Panc1 (cell line): ENCODE measurements at regions of chr7 and their contacts with region 1.

Region 1: DNA sequence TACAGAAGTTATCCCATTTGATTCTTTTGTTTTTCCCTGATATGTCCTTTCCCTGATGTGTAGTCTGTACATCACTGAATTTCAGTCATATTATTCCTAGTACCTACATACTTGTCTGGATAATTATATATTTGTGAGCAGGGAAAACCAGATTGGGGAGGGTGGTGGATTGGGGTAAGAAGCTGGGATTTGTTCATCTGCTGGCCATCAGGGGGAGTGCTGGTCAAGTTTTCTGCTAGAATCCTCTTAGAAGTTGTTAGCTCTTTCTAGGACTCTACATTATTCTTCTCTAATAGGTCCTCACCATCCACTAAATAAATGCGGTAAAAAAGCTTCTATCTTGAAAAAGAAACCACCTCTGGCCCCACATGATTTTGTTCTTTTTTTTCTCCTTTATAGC is 232.7 kb upstream of the TAC1 start:
- DNase-seq: peak; percentile 30
- ATAC-seq: peak; percentile 82
- H3K4me3 ChIP-seq: no peak overlapping the region
- H3K27ac ChIP-seq: no peak overlapping the region
- H3K4me1 ChIP-seq: no peaks in the 10 kb centered on the region
- H3K27me3 ChIP-seq: no peaks in the 10 kb centered on the region; the same call in 1 of the 2 replicates
- CTCF ChIP-seq: peak; percentile 73

Region 2: GRCh38 chr7:97317575-97317974 is 181.6 kb before region 1 on chr7:
- CTCF ChIA-PET with region 1: no interaction called
- POLR2A ChIA-PET with region 1: no interaction called
- in situ Hi-C with region 1: no loop called
- intact Hi-C with region 1: no loop called
- DNase-seq: no peak
- ATAC-seq: no peak
- H3K4me3 ChIP-seq: no peak overlapping the region
- H3K27ac ChIP-seq: no peak overlapping the region
- H3K4me1 ChIP-seq: no peaks in the 10 kb centered on the region
- H3K27me3 ChIP-seq: no peaks in the 10 kb centered on the region
- CTCF ChIP-seq: no peak

Region 3: GRCh38 chr7:97555857-97556421 is 56.7 kb after region 1 on chr7:
- CTCF ChIA-PET with region 1: no interaction called
- POLR2A ChIA-PET with region 1: no interaction called
- in situ Hi-C with region 1: no loop called
- intact Hi-C with region 1: no loop called
- DNase-seq: no peak
- ATAC-seq: no peak
- H3K4me3 ChIP-seq: no peak overlapping the region
- H3K27ac ChIP-seq: no peak overlapping the region
- H3K4me1 ChIP-seq: no peaks in the 10 kb centered on the region
- H3K27me3 ChIP-seq: no peaks in the 10 kb centered on the region
- CTCF ChIP-seq: no peak

Region 4: DNA sequence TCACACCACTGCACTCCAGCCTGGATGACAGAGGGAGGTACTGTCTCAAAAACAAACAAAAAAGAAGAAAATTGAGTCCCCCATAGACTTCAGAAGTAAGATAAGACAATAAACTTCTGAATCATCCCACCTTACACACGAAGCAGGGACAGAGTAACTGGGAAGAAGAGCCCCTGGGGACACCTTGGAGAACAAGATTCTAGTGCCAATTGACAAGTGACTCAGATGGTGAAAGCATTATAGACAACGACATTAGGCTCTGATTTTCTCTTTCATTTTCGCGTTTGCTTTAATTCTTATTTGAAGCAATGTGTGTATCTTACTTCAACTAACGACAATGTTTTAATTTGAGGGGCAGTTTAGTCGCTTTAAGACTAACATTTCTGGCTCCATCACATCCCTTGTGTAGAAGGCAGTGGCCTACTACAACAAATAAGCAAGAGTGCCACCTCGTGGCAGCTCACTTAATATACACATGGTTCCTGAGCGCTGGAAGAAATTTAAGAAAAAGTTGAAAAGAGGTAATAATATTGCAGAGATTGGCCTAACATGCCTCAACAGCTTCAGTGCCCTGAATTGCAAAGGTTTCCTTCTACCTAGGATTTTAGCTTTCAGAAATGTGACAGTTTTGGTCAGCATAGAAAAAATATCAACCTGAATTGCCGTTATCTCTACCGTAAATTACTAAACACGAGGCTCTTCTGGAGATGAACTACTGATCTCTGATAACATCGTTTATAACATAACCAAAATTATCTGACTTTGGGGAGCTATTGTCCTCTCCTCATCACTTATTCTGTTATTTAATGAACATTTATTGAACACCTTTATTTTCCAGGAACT is 336.3 kb after region 1 on chr7:
- CTCF ChIA-PET with region 1: no interaction called
- POLR2A ChIA-PET with region 1: no interaction called
- in situ Hi-C with region 1: no loop called
- intact Hi-C with region 1: loop called (anchors 1 kb)
- DNase-seq: peak; percentile 60
- ATAC-seq: peak; percentile 91
- H3K4me3 ChIP-seq: no peak overlapping the region
- H3K27ac ChIP-seq: no peak overlapping the region
- H3K4me1 ChIP-seq: no peaks in the 10 kb centered on the region
- H3K27me3 ChIP-seq: peaks cover 16% of the 10 kb centered on the region; the same call in 1 of the 2 replicates
- CTCF ChIP-seq: peak; percentile 78